B cell (primary cell): ENCODE measurements at regions of chr12 and their contacts with region 1.

Region 1: GRCh38 chr12:93243689-93244513 is 133.8 kb upstream of the NUDT4 start:
- DNase-seq: peak; percentile 29
- ATAC-seq: no peak
- H3K4me3 ChIP-seq: peak overlapping the region in 1 of 5 experiments; percentile 22
- H3K4me3 Mint-ChIP-seq: peak overlapping the region; percentile 11
- H3K27ac ChIP-seq: no peak overlapping the region
- H3K27ac Mint-ChIP-seq: no peak overlapping the region
- H3K4me1 ChIP-seq: peaks cover 32 to 35% of the 10 kb centered on the region in 2 donors
- H3K4me1 Mint-ChIP-seq: peaks cover 37% of the 10 kb centered on the region
- H3K27me3 ChIP-seq: no peaks in the 10 kb centered on the region
- H3K27me3 Mint-ChIP-seq: no peaks in the 10 kb centered on the region
- CTCF ChIP-seq: no peak

Region 2: DNA sequence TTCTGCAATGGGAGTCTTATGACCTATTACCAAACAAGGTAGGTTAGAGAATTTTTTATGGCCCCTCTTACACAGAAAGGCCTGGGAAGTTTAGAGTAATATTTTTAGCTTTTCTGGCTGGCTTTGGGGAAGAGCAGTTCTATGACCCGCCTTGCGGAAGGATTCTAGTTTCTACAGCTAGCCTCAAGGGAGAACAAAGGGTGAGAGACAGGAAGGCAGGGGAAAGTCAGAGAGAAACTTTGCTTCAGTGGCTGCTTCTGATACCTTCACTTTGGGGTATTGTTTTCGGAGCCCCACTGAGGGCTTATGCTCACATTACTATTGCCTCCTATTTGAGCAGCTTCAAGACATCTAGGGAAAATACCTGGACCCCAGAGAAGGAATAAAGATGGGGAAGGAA is 53.1 kb after region 1 on chr12:
- CTCF ChIA-PET with region 1: no interaction called
- POLR2A ChIA-PET with region 1: no interaction called
- intact Hi-C with region 1: loop called (anchors 5 kb)
- DNase-seq: peak; percentile 54
- ATAC-seq: peak; percentile 58
- H3K4me3 ChIP-seq: no peak overlapping the region
- H3K4me3 Mint-ChIP-seq: peak overlapping the region; percentile 60
- H3K27ac ChIP-seq: no peak overlapping the region
- H3K27ac Mint-ChIP-seq: no peak overlapping the region
- H3K4me1 ChIP-seq: peaks cover 16% of the 10 kb centered on the region in 2 donors
- H3K4me1 Mint-ChIP-seq: peaks cover 13% of the 10 kb centered on the region
- H3K27me3 ChIP-seq: peaks cover 0 to 4% (median 0%) of the 10 kb centered on the region in 4 experiments
- H3K27me3 Mint-ChIP-seq: peaks cover 14% of the 10 kb centered on the region
- CTCF ChIP-seq: no peak

Region 3: GRCh38 chr12:93536766-93537488 is 293.0 kb after region 1 on chr12:
- CTCF ChIA-PET with region 1: no interaction called
- POLR2A ChIA-PET with region 1: no interaction called
- intact Hi-C with region 1: no loop called
- DNase-seq: peak; percentile 25
- ATAC-seq: peak; percentile 58
- H3K4me3 ChIP-seq: peak overlapping the region in 1 of 5 experiments; percentile 13
- H3K4me3 Mint-ChIP-seq: peak overlapping the region; percentile 59
- H3K27ac ChIP-seq: peak overlapping the region in 1 of 2 donors; percentile 27
- H3K27ac Mint-ChIP-seq: peak overlapping the region; percentile 7
- H3K4me1 ChIP-seq: peaks cover 20 to 23% of the 10 kb centered on the region in 2 donors
- H3K4me1 Mint-ChIP-seq: peaks cover 24% of the 10 kb centered on the region
- H3K27me3 ChIP-seq: no peaks in the 10 kb centered on the region
- H3K27me3 Mint-ChIP-seq: no peaks in the 10 kb centered on the region
- CTCF ChIP-seq: no peak